PC-3 (cell line): ENCODE measurements at regions of chr9 and their contacts with region 1.

Region 1: DNA sequence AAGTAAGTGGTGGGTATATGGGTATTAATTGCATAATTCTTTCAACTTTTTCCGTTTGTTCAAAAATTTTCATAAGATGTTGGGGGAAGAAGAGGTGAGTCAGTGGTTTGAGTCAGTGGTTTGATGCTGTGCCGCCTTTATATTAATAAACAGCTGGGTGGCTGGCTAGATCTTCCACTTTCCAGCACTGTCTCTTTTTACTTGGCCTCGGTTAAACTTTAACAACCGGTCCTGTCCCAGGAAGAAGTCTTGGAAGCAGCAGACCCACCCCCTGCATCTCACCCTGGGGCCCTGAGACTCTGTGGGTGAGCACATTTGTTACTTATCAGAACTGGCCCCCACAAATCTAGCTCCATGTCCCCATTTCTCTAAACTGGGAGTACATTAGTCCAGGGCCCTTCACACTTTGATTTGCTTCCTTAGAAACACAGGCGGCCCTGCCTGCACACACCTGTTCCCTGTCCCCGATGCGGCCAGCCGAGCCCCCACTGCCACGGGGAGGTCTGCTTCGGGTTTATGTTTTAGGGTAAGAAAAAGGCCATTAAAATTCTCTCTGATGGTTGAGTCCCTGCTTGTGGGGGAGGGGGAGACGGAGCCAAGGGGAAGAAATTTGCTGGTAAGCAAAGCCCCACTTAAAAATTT is 90.7 kb downstream of the PTCH1 start:
- DNase-seq: peak; percentile 55
- ATAC-seq: peak; percentile 57
- H3K4me3 ChIP-seq: peak overlapping the region; percentile 88
- H3K27ac ChIP-seq: peak overlapping the region; percentile 76
- H3K4me1 ChIP-seq: peaks cover 4% of the 10 kb centered on the region
- H3K27me3 ChIP-seq: no peaks in the 10 kb centered on the region
- CTCF ChIP-seq: no peak

Region 2: DNA sequence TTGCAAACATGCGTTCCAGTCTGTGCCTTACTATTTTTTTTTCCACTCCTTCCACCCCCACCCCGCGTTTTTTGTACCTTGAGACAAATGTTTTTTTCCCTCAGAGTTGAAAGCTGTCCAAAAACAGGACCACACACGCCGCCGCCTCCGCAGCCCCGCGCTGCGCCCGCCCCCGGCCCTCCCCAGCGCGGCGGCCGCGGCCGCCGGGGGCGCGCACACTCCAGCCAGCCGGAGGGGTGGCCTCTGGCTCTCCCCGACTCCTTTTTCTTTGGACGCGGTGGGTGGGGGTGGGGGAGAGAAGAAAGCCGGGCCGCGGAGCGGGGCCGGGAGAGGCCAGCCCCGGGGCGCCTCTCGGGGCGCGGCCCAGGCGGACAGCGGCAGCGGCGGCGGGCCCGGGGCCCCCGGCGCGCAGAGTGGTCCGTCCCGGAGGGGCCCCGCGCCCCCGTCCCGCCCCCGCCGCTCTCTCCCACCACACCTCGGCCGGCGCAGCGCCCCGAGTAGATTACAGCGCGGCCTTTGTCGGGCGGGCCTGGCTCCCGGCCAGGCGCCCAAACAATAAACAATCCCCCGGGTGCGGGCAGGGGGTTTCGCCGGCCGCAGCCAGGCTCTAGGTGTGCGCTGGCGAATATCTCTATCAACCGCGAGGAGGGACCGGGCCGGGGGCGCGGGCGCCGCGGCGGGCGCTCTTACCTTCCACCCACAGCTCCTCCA is 79.8 kb after region 1 on chr9:
- CTCF ChIA-PET with region 1: no interaction called
- POLR2A ChIA-PET with region 1: no interaction called
- intact Hi-C with region 1: loop called (anchors 2 kb)
- DNase-seq: peak; percentile 23
- ATAC-seq: no peak
- H3K4me3 ChIP-seq: peak overlapping the region; percentile 96
- H3K27ac ChIP-seq: no peak overlapping the region
- H3K4me1 ChIP-seq: peaks cover 14% of the 10 kb centered on the region
- H3K27me3 ChIP-seq: no peaks in the 10 kb centered on the region
- CTCF ChIP-seq: no peak